ENCODE measurements at regions of chr1 and their contacts with region 1.

Region 1: DNA sequence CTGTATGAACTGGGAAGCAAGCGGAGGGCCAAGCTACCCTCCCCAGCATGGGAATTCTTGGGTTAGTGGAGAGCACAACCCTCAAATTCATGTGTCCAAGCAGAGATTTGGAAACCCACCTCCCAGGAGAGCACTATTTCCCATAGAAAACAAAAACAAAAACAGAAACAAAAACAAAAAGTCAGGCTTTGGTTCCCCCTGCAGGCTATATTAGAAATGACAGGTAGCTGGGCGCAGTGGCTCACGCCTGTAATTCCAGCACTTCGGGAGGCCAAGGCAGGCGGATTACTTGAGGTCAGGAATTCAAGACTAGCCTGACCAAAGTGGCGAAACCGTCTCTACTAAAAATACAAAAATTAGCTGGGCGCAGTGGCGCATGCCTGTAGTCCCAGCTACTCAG is 10.8 kb downstream of the MINDY1 start:
- DNase-seq: no peak
- H3K4me3 ChIP-seq: no peak overlapping the region
- H3K27me3 ChIP-seq: no peaks in the 10 kb centered on the region
- CTCF ChIP-seq: peak; percentile 64

Region 2: GRCh38 chr1:150979092-150980056 is 16.5 kb before region 1 on chr1:
- CTCF ChIA-PET with region 1: interaction called, 217 read pairs
- POLR2A ChIA-PET with region 1: interaction called, 5 read pairs
- DNase-seq: peak; percentile 33
- H3K4me3 ChIP-seq: no peak overlapping the region
- H3K27me3 ChIP-seq: no peaks in the 10 kb centered on the region
- CTCF ChIP-seq: peak; percentile 100

Region 3: GRCh38 chr1:151098126-151098525 is 102.2 kb after region 1 on chr1:
- CTCF ChIA-PET with region 1: no interaction called
- POLR2A ChIA-PET with region 1: no interaction called
- DNase-seq: no peak
- H3K4me3 ChIP-seq: no peak overlapping the region
- H3K27me3 ChIP-seq: no peaks in the 10 kb centered on the region
- CTCF ChIP-seq: no peak

Measured in BJ (cell line).